Left ventricle myocardium inferior (tissue), 1 donor: ENCODE measurements at regions of chr2 and their contacts with region 1.

Region 1: DNA sequence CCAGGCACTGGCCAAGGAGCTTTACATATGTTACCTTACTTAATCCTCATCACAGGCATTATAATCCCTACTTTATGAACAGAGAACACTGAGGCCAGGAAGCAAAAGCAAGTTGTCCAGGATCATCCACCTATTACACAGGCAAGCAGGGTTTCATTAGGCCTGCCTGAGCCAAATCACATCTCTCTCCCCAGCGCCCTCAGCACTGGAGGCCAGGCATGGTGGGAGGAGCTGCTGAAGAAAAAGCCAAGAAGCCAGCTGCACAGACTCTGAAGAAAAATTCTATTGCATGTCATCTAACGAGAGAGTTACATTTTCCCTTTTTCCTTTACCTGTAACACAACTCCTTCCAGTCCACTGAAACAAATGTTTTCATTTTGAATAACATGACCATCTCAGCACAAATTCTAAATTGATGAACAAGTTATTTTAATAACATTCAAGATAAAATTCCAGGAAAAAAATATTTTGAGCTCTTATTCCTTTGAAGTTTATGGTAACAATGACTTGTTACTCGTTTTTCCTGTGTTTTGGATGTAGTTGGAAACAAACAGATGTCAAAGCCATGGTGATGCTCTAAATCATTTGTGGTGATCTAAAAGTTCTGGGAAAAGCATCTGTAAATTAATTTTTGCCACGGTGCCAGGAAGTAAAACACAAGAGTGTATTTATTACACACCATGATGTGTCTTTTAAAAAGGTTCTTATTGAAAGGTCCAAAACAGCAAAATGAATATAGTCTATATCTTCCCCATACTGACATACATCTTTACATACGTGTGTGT is 139.0 kb upstream of the ITGB6 start:
- DNase-seq: peak; percentile 39
- H3K4me3 ChIP-seq: no peak overlapping the region
- H3K27ac ChIP-seq: peak overlapping the region; percentile 54
- H3K4me1 ChIP-seq: peaks cover 99% of the 10 kb centered on the region
- H3K27me3 ChIP-seq: no peaks in the 10 kb centered on the region
- CTCF ChIP-seq: no peak

Region 2: DNA sequence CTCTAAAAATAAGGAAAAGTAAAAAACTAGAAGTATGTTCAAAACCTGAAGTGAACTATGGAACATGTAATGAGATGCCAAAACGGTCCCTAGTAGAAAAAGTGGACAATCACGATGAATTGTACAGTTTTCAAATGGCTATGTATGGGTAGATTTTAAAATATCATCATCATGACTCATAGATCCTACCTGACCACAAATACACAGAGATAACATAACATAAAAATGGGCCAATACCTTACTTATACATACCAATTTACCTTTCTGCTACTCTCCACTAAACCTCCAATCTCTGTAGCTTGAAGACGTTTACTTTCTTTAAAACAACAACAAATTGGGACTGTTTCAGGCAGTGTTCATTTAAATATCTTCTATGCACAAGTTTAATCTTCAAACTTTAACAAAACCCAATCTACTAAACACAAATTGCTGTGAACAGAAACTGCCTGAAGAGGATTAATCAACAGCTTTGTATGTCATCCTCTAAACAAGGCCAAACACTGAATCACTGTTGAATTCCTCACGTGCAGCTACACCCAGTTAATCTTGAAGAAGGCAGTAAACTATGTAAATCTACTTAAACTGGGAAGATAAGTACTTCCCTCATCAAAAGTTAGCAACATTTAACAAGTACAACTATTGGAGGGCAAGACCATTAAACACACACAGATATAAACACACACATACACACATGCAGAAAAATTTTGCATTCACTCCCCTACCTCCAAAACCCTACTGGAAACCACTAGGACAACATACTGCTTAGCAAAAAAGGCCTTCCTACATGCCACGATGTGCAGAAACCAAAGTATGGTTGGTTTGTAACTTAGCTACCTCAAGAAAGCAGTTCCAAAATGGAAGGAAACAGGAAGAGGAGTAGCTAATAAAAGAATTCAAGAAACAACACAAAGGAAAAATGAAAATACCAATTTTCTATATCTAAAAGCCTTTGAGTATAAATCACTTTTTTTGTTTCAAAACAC is 64.2 kb after region 1 on chr2:
- intact Hi-C with region 1: no loop called
- DNase-seq: no peak
- H3K4me3 ChIP-seq: peak overlapping the region; percentile 95
- H3K27ac ChIP-seq: peak overlapping the region; percentile 21
- H3K4me1 ChIP-seq: peaks cover 94% of the 10 kb centered on the region
- H3K27me3 ChIP-seq: no peaks in the 10 kb centered on the region
- CTCF ChIP-seq: no peak

Region 3: DNA sequence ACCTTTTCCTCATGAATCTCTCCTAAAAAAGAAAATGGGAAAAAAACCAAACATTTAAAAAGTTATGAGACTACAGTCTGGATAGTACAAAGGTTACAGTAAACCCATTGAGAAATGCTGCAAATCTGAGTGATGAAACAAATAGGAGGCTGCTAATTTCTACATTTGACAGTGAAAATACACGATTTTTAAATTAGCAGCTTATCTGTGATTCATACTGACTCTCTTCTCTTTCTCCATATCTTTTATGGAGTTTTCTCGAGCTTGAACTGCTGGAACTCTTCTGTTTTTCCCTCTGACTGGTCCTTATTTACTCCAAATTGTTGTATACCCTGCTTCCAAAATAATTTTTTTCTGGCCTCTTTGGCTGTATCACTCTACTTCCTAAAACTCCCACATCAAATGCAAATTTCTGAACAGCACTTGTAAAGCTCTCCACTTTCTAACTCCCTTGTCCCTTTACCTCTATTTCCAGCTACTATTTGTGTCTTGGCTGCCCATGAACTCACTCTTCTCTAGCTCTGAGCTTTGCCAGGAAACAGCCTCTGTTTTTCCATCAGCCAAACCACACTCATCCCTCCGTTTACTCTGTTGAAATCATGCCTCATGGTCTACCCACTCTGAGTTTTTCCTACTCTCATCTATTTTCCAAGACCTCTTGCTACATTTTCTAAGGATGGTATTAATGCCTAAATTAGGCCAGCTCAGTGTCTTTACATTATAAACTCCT is 80.8 kb after region 1 on chr2:
- intact Hi-C with region 1: loop called (anchors 5 kb)
- DNase-seq: no peak
- H3K4me3 ChIP-seq: no peak overlapping the region
- H3K27ac ChIP-seq: peak overlapping the region; percentile 65
- H3K4me1 ChIP-seq: peaks cover 71% of the 10 kb centered on the region
- H3K27me3 ChIP-seq: no peaks in the 10 kb centered on the region
- CTCF ChIP-seq: no peak

Region 4: GRCh38 chr2:160465406-160465805 is 126.3 kb after region 1 on chr2:
- intact Hi-C with region 1: no loop called
- DNase-seq: no peak
- H3K4me3 ChIP-seq: no peak overlapping the region
- H3K27ac ChIP-seq: no peak overlapping the region
- H3K4me1 ChIP-seq: peaks cover 89% of the 10 kb centered on the region
- H3K27me3 ChIP-seq: no peaks in the 10 kb centered on the region
- CTCF ChIP-seq: no peak